Cardiac septum (tissue), 1 donor: ENCODE measurements at regions of chr2 and their contacts with region 1.

Region 1: GRCh38 chr2:200479692-200480265 is 30.1 kb downstream of the KCTD18 start:
- DNase-seq: no peak

Region 2: DNA sequence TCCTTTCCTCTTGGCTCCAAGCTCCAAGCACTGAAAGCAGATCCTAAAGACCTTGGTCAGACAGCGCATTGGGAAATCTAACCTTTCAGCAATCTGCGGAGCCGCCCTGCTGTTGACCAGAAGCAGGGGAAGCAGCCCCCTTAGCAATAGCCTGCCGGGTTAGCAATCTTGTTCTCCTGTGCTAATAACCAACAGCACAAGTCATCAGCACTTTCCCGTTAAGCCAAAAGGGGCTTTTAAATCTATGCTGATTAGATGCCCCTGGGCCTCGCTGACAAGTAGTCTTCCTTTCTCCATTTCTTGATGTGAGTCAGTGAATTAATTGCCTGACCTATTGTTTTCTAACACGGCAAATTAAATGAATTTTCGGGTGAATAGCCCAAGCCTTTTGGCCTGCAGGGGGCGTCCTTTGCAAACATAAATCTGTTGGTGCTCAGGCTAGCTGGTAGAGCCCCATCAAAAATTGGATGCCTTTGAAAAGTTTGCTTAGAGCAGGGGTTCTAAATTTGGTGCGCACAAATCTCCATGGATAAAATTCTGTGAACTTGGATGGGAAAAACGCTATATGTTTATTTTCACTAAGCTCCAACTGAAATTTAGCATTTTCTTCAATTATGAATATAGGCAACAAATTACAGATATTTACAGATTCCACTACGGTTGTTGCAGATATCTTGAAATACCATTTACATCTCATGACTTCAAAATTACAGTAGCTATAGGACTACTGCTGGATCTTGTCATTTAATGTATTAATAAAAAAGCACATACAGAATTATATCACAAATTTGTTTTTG is 499.7 kb before region 1 on chr2:
- intact Hi-C with region 1: loop called (anchors 2 kb)
- DNase-seq: peak; percentile 83

Region 3: GRCh38 chr2:200662738-200663137 is 183.0 kb after region 1 on chr2:
- intact Hi-C with region 1: no loop called
- DNase-seq: no peak

Region 4: DNA sequence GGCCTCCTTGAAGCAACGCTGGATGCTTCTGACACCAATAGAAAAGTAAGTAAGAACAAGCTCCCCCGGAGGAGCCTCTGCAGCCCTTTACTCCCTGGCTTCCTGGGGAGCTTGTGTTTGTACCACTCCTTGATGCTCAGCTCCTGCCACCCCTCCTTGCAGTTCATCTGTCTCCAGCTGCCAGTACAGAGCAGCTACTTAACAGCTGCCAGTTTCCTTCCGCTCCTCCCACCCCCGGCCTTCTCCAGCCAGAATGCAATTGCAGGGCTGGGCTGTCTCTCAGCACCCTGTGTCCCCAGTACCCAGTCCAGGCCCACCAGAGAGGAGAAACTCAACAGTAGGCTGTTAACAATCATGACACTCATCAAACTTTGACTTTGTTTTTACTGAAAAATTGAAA is 215.4 kb after region 1 on chr2:
- intact Hi-C with region 1: no loop called
- DNase-seq: no peak